ENCODE measurements at regions of chr16 and their contacts with region 1.

Region 1: GRCh38 chr16:20900299-20901067 is at the starts of genes DCUN1D3 and LYRM1:
- DNase-seq: peak; percentile 92 to 99
- H3K4me3 ChIP-seq: peak within 1 kb of the TSS; percentile 80 to 93
- H3K27ac ChIP-seq: peak within 1 kb of the TSS; percentile 96 to 100
- H3K4me1 ChIP-seq: peaks cover 12 to 56% of the 10 kb centered on the region in 2 donors
- H3K27me3 ChIP-seq: no peaks in the 10 kb centered on the region
- CTCF ChIP-seq: no peak
- total RNA-seq, gene DCUN1D3: 9.8 TPM
- total RNA-seq, gene LYRM1: 3.9 TPM

Region 2: DNA sequence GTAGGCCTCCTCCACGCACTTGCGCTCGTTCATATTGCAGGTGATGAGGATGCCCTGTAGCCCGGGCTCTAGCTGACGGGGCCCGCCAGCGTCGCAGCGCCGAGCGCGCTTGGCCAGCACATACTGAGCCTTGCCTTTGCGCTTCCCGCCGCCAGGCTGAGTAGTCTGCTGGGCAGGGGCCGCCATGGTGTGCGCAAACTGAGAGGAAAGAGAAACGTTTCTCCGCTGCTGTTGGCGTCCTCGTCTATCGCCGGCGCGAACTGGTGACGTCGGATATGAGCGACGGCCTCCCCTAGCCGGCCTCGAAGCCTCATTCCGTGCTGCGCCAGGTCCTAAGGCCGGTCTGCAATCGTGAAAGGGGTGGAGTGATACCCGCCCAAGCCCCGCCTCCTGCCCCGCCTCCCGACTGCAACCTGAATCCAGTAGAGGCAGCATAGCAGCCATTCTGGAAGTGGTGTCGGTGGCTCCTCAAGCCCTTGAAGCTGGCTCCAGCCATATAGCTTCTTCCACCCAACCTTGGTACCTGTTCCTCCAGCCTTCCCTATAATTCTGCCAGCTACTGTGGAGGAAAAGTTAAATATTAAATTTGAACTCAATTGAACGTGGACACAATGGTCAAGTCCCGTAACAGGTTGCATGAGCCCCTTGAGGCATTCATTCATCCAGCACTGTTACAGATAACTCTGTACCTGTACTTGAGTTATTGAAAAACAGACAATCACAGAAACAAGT is 158.8 kb before region 1 on chr16 and contains the start of gene THUMPD1:
- intact Hi-C with region 1: loop called (anchors 5 kb)
- DNase-seq: peak; percentile 90 to 98
- H3K4me3 ChIP-seq: peak within 1 kb of the TSS; percentile 85 to 88
- H3K27ac ChIP-seq: peak within 1 kb of the TSS; percentile 94 to 97
- H3K4me1 ChIP-seq: peaks cover 3 to 19% of the 10 kb centered on the region in 2 donors
- H3K27me3 ChIP-seq: no peaks in the 10 kb centered on the region
- CTCF ChIP-seq: peak in 2 of 3 experiments; percentile 15 to 34
- total RNA-seq, gene THUMPD1: 12.7 TPM

Region 3: GRCh38 chr16:20879175-20880040 is 21.1 kb before region 1 on chr16:
- intact Hi-C with region 1: loop called (anchors 2 kb)
- DNase-seq: no peak
- H3K4me3 ChIP-seq: peak overlapping the region; percentile 7 to 29
- H3K27ac ChIP-seq: peak overlapping the region; percentile 73 to 86
- H3K4me1 ChIP-seq: peaks cover 8 to 54% of the 10 kb centered on the region in 2 donors
- H3K27me3 ChIP-seq: no peaks in the 10 kb centered on the region
- CTCF ChIP-seq: no peak

Region 4: DNA sequence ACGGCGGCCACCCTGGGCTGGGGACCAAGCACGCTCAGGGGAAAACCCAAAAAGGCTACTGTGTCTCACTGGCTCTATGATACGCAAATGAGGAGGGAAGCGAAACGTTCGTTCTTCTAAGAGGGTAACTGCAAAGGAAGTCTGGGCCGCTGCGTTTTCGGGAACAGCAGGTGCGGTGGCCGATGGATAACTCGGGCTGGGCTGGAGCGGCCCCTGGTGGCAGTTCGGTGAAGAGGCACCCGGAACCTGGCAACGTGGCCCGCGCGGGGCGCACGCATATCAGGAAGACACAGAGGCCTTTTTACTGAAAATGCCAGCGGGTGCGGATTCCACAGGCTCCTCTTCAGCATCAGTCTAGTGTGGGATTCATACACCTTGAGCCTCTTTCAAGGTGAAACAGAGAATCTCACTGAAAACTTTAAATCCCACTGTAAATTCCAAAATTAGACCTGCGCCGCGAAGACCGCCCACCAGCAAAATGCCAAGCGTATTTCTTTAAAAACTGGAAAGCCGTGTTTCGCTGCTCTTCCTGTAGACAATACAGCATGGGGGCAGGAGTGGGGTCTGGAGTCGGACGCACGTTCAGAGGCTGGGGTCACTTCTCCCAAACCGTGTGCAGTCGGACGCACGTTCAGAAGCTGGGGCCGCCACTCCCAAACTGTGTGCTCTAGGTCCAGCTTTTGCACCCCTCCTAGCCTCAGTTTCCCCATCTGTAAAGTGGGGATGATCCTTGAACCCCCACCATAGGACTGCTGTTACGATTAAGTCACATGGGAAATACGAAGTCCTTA is 654.5 kb after region 1 on chr16:
- intact Hi-C with region 1: loop called (anchors 5 kb)
- DNase-seq: peak in 1 of 2 donors; percentile 96
- H3K4me3 ChIP-seq: peak overlapping the region; percentile 26 to 41
- H3K27ac ChIP-seq: no peak overlapping the region
- H3K4me1 ChIP-seq: peaks cover 0 to 19% of the 10 kb centered on the region in 2 donors
- H3K27me3 ChIP-seq: no peaks in the 10 kb centered on the region
- CTCF ChIP-seq: peak; percentile 93 to 100 (median 93)

Region 5: GRCh38 chr16:22206013-22206841 is 1305.7 kb after region 1 on chr16 and contains the start of gene EEF2K:
- intact Hi-C with region 1: loop called (anchors 5 kb)
- DNase-seq: peak; percentile 79 to 97
- H3K4me3 ChIP-seq: peak within 1 kb of the TSS; percentile 74 to 85
- H3K27ac ChIP-seq: peak within 1 kb of the TSS; percentile 87 to 88
- H3K4me1 ChIP-seq: peaks cover 3 to 44% of the 10 kb centered on the region in 2 donors
- H3K27me3 ChIP-seq: no peaks in the 10 kb centered on the region
- CTCF ChIP-seq: peak; percentile 70 to 98 (median 84)
- total RNA-seq, gene EEF2K: 31.9 TPM